Kidney (tissue), 22 donors: ENCODE measurements at regions of chr7 and their contacts with region 1.

Region 1: GRCh38 chr7:86926732-86927131 is 132.7 kb downstream of the ELAPOR2 start:
- DNase-seq: peak in 2 of 5 donors; percentile 21 to 50
- H3K4me3 ChIP-seq: no peak overlapping the region
- H3K27ac ChIP-seq: no peak overlapping the region
- H3K4me1 ChIP-seq: no peaks in the 10 kb centered on the region
- H3K27me3 ChIP-seq: no peaks in the 10 kb centered on the region
- CTCF ChIP-seq: peak; percentile 51

Region 2: DNA sequence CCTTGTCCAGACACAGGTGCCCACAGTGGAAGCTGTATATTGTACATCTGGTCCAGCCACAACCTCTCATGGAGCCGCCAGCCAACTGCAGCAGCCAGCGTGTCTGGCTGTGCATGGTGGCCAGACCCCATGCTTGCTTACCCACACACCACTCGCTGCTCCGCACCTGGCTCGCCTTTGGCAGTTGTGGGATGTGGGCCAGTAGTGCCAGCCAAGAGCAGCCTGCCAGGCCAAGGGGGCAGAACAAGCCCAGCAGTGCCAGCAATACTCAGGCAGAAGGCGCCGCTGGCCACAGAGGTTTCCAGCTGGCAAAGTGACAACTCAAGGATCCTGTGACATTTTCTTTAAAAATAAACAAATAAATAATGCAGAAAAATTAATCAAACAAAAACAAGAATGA is 304.5 kb after region 1 on chr7:
- intact Hi-C with region 1: loop called (anchors 10 kb)
- DNase-seq: peak in 1 of 5 donors; percentile 68
- H3K4me3 ChIP-seq: no peak overlapping the region
- H3K27ac ChIP-seq: no peak overlapping the region
- H3K4me1 ChIP-seq: peaks cover 0 to 2% (median 0%) of the 10 kb centered on the region in 3 donors
- H3K27me3 ChIP-seq: no peaks in the 10 kb centered on the region
- CTCF ChIP-seq: no peak

Region 3: DNA sequence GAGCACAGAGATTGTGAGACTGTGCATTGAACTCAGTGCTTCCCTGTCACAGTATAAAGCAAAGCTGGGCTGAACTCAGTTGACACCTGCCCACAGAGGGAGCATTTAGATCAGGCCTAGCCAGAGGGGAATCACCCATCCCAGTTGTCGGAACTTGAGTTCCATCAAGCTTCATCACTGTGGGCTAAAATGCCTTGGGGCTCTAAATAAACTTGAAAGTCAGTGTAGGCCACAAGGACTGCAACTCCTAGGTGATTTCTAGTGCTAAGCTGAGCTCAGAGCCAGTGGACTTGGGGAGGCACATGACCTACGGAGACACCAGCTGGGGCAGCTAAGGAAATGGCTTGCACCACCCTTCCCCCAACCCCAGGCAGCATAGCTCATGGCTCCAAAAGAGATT is 556.4 kb after region 1 on chr7:
- intact Hi-C with region 1: no loop called
- DNase-seq: no peak
- H3K4me3 ChIP-seq: no peak overlapping the region
- H3K27ac ChIP-seq: no peak overlapping the region
- H3K4me1 ChIP-seq: no peaks in the 10 kb centered on the region
- H3K27me3 ChIP-seq: no peaks in the 10 kb centered on the region
- CTCF ChIP-seq: no peak